Dendritic cell treated with granulocyte-macrophage colony-stimulating factor and Interleukin-4, amounts not matched to agents 40 ng/mL and 50 ng/mL, for 4 days (primary cell): ENCODE measurements at regions of chr4 and their contacts with region 1.

Region 1: DNA sequence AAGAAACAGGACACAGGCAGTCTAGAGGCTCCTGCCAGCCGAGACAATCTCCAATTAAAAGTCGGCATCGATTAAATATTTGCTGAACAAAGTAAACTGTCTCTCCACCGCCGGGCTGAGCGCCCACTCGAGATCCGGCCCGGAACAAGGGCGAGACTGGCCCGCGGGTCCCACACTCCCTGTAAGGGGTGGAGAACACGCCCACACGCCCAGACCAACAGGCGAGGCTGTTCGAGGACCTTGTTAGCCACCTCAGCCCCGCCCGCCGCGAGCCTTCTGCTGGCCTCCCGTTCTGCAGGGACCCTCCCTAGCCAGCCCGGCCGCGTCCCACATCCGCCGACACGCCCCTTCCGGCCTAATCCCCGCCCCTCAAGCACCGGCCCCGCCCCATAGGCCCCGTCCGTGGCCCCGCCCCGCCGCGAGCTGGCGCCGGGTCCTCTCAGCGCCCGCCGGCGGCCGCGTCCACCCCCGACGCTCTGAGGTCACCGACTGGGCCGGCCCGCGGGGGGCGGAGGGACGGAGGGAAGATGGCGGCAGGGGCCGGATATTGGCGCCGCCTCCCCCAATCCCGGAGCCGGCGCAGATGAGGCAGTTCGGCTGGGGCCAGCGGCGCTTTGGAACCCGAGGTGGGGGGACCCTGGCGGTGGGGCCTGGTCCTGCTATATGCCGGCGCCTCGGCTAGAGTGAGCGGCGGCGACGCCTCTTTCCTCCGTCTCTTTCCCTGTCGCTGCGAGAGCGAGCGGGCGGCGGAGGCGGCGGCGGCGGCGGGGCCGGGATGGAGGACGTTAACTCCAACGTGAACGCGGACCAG is at the start of gene SLAIN2:
- H3K4me3 Mint-ChIP-seq: peak within 1 kb of the TSS; percentile 99
- H3K27ac Mint-ChIP-seq: peak within 1 kb of the TSS; percentile 95
- H3K4me1 Mint-ChIP-seq: peaks cover 48% of the 10 kb centered on the region
- H3K27me3 Mint-ChIP-seq: no peaks in the 10 kb centered on the region

Region 2: GRCh38 chr4:47485047-47485692 is 856.0 kb before region 1 on chr4 and contains the start of gene ATP10D:
- intact Hi-C with region 1: loop called (anchors 5 kb)
- H3K4me3 Mint-ChIP-seq: peak within 1 kb of the TSS; percentile 90
- H3K27ac Mint-ChIP-seq: peak within 1 kb of the TSS; percentile 100
- H3K4me1 Mint-ChIP-seq: peaks cover 28% of the 10 kb centered on the region
- H3K27me3 Mint-ChIP-seq: no peaks in the 10 kb centered on the region

Region 3: DNA sequence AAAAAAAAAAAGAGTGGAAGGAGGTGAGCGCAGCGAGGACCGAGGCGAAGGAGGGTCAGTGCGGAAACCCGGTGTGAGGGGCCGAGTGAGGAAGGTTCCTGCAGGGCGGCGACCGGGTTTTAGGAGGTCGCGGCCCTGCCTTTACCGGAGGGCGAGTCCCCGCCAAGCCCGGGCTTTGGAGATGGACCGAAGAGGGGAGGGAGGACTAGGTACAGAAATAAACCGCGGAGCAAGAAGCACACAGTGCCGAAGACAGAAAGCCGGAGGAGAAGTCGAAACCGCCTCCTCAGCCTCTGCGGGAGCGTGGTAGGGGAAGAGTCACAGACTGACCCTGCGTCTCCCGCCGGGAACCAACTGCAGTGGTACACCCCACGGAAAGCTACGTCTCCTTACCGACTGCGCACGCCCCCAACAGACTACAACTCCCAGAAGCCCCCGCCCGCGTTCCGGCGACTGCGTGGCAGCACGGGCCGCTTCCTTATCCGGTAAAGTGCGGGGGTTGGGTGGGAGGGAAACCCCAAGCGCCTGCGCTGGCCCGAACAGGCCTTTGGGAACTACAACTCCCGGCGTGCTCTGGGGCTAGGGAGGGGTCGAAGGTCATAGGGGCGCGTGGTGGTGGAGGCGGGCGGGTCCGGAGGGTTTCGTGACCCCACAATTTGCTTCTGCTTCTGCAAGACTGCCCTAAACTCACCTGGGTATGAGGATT is 426.8 kb before region 1 on chr4 and contains the start of gene NFXL1:
- intact Hi-C with region 1: loop called (anchors 10 kb)
- H3K4me3 Mint-ChIP-seq: peak within 1 kb of the TSS; percentile 99
- H3K27ac Mint-ChIP-seq: peak within 1 kb of the TSS; percentile 98
- H3K4me1 Mint-ChIP-seq: peaks cover 46% of the 10 kb centered on the region
- H3K27me3 Mint-ChIP-seq: no peaks in the 10 kb centered on the region

Region 4: DNA sequence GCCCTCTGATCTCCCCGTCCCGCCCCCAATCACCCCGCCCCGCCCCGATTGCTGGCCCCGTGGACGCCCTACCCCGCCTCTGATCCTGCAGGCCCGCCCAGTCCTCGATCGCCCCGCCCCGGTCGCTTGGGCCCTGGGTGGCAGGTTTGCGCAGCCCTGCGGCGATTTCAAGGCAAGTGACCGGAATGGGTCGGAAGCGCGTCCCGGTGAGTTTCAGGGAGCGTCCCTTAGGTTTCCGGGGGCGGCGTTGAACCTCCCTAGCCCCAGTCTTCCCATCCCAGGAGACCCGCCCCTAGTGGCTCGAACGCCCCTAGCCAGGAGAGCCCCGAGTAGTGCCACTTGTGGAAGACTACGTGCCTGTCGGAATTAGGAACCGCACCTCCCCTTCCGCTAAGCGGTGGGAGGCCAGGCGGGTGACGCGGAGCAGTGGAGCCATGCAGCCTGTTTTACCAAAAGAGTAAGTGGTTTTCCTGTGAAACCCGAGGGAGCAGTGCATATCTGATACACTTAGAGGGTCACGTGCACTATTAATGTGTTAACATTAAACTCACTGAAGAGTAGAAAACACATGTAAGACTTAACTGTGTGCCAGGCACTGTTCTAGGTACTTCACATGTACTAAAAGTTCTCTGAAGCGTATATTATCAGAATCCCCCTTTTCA is 71.2 kb before region 1 on chr4:
- intact Hi-C with region 1: loop called (anchors 1 kb)
- H3K4me3 Mint-ChIP-seq: peak overlapping the region; percentile 95
- H3K27ac Mint-ChIP-seq: peak overlapping the region; percentile 94
- H3K4me1 Mint-ChIP-seq: peaks cover 38% of the 10 kb centered on the region
- H3K27me3 Mint-ChIP-seq: no peaks in the 10 kb centered on the region

Region 5: DNA sequence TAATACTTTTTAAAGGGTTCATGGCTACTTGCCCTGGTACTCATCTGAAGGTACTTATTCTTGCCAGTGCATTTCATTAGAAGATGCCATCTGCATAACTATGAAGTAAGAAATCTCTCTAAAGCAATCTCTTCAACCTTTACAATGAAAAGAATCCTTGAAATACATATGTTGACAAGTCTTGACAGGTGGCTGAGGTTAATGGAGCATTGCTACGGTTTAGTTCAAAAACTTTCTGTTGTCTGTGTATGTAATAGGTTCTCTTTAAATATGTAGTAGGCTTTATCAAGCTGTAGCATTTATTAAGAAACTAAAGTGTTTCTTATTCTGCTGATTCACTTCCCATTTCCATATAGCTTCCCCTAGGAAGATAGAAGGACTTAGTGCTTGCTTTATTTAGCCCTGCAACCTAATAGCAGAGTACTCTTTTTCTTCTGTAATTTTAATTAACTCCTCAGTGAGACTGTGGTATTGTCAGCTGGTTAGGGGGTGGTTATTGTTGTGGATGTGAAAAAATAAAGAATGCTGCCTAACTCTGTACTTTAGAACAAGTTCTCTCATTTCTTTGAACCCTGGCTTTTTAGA is 39.5 kb after region 1 on chr4:
- intact Hi-C with region 1: loop called (anchors 5 kb)
- H3K4me3 Mint-ChIP-seq: no peak overlapping the region
- H3K27ac Mint-ChIP-seq: no peak overlapping the region
- H3K4me1 Mint-ChIP-seq: peaks cover 31% of the 10 kb centered on the region
- H3K27me3 Mint-ChIP-seq: no peaks in the 10 kb centered on the region

Region 6: DNA sequence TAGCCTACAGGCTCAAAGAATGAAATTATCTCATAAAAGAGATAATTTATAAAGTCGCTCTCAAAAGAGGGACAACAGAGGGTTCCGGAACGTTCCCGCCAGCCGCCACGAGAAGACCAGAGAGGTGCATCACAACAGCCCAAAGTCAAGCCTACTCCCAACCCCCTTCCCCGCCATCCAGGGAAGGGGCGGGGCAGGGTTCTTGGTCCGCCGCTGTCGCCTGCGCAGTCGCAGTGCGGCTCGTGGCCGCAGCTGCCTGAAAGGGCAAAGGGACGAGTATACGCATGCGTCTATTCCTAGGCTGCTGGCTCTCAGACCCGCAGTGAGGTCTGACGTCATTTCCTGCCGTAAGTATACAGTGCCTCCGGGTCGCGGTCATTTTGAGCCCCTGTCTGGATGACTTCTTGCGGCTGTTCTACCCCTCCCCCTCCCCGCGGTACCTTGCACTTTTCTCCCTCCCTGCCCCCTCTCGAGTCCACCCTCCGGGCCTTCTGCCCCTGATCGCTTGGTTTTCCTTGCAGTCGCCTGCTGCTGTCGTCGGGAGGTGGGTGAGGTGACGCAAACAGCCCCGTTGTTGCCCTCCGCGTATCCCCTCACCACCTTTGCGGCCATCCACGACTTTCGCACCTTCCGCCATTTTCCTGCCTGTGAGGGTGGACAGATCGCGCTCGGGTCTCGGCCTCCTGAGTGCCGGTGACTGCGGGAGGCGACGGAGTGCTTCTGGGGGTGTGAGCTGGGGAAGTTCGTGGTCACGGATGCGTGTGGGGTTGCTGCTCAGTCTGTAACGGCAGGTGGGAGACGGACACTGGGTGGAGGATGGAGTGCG is 489.7 kb after region 1 on chr4 and contains the start of gene OCIAD1:
- intact Hi-C with region 1: loop called (anchors 2 kb)
- H3K4me3 Mint-ChIP-seq: peak within 1 kb of the TSS; percentile 97
- H3K27ac Mint-ChIP-seq: peak within 1 kb of the TSS; percentile 97
- H3K4me1 Mint-ChIP-seq: no peaks in the 10 kb centered on the region
- H3K27me3 Mint-ChIP-seq: peaks cover 6% of the 10 kb centered on the region